ENCODE measurements at regions of chr19 and their contacts with region 1.

Region 1: GRCh38 chr19:11422163-11423021 is 3.3 kb upstream of the RGL3 start:
- DNase-seq: peak; percentile 89
- ATAC-seq: peak; percentile 84
- H3K4me3 Mint-ChIP-seq: peak overlapping the region; percentile 81
- H3K27ac Mint-ChIP-seq: peak overlapping the region; percentile 66
- H3K4me1 Mint-ChIP-seq: peaks cover 54% of the 10 kb centered on the region
- H3K27me3 Mint-ChIP-seq: peaks cover 18% of the 10 kb centered on the region
- CTCF ChIP-seq: no peak

Region 2: DNA sequence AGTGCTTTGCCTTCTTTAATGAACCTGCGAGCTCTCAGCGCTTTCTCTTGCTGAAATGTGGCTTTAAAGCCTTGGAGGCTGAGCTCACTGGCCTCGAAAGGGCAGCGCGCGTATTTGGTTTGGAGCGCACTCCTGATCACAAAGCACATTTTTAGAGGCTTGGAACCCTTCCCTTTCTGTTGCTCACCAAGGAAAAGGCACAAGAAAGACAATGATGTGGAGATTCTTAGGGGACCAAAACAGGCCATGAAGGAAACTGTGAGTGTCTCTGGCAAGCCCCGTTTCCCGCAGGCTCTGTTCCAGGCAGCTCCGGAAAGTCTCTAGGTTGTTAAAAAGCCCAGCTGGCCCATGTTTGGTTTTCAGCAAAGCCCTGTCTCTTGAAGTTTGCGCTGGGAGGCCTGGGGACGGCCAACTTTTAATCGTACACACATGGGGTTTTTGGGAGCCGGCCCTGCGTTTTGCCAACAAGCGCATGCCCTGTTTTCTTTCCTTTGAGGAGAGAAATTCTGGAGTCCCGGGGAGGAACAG is 257.4 kb before region 1 on chr19:
- CTCF ChIA-PET with region 1: no interaction called
- POLR2A ChIA-PET with region 1: no interaction called
- intact Hi-C with region 1: no loop called
- DNase-seq: no peak
- ATAC-seq: no peak
- H3K4me3 Mint-ChIP-seq: no peak overlapping the region
- H3K27ac Mint-ChIP-seq: no peak overlapping the region
- H3K4me1 Mint-ChIP-seq: no peaks in the 10 kb centered on the region
- H3K27me3 Mint-ChIP-seq: no peaks in the 10 kb centered on the region
- CTCF ChIP-seq: no peak

Region 3: GRCh38 chr19:11346092-11346940 is 76.1 kb before region 1 on chr19 and contains the starts of genes CCDC159 and TMEM205:
- CTCF ChIA-PET with region 1: interaction called, 3 read pairs
- POLR2A ChIA-PET with region 1: interaction called, 5 read pairs
- intact Hi-C with region 1: loop called (anchors 2 kb)
- DNase-seq: peak; percentile 93
- ATAC-seq: peak; percentile 95
- H3K4me3 Mint-ChIP-seq: peak within 1 kb of the TSS; percentile 98
- H3K27ac Mint-ChIP-seq: peak within 1 kb of the TSS; percentile 93
- H3K4me1 Mint-ChIP-seq: peaks cover 30% of the 10 kb centered on the region
- H3K27me3 Mint-ChIP-seq: no peaks in the 10 kb centered on the region
- CTCF ChIP-seq: no peak
- total RNA-seq, gene CCDC159: 27.6 and 32.1 TPM in 2 replicates
- total RNA-seq, gene TMEM205: 61.8 and 68.1 TPM in 2 replicates

Region 4: GRCh38 chr19:11606484-11606883 is 184.1 kb after region 1 on chr19:
- CTCF ChIA-PET with region 1: no interaction called
- POLR2A ChIA-PET with region 1: no interaction called
- intact Hi-C with region 1: no loop called
- DNase-seq: no peak
- ATAC-seq: no peak
- H3K4me3 Mint-ChIP-seq: no peak overlapping the region
- H3K27ac Mint-ChIP-seq: no peak overlapping the region
- H3K4me1 Mint-ChIP-seq: peaks cover 12% of the 10 kb centered on the region
- H3K27me3 Mint-ChIP-seq: no peaks in the 10 kb centered on the region
- CTCF ChIP-seq: no peak

Measured in activated B cell treated with CpG ODN at 0.5 μM for 24 hours (primary cell).